ENCODE measurements at regions of chr11 and their contacts with region 1.

Region 1: DNA sequence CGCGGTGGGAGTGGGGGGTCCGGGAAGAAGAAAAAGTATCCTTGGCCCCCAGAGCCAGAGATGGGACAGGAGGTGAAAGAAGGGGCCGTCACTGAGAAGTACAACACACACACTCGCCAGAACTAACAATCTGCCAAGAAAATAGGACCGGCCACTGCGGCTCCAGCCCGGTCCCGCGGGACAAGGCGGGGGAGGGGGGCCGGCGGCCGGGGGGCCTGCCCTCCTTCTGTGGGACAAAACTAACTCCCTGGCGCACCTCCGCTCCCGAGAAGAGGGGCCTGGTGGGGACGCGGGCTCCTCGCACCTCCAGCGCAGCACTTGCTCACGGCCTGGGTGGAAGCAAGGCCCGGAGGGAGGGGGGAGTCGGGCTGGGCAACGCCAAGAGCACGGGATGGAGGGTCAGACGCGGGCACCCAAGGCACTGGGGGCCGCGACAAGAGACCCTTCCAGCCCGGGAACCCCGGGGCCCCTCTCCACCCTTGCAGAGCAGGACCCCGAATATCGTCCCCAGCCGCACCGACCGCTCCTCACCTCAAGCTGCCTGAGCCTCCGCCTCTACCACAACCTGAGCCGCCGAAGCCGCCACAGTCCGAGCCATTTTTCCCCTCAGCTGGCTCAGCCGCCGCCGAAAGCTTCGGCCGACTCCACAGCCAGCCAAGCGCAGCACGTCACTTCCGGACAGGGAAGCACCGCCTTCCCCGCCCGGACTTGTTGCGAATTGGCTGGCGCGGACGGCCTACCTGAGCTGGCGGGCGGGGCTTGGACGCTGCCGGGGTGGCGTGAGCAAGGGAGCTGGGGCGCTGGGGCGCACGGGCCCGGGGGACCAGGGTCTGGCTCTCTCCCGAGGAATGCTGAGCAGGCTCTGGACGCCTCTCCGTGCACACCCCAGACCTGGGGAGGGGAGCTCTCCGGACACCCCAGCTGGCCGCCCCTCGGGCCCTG is at the start of gene PIK3C2A:
- DNase-seq: peak; percentile 96
- H3K4me3 ChIP-seq: peak within 1 kb of the TSS; percentile 95
- H3K27ac ChIP-seq: peak within 1 kb of the TSS; percentile 89
- H3K4me1 ChIP-seq: peaks cover 6% of the 10 kb centered on the region
- H3K27me3 ChIP-seq: no peaks in the 10 kb centered on the region
- CTCF ChIP-seq: no peak
- total RNA-seq, gene PIK3C2A: 43.8 and 44.2 TPM in 2 replicates

Region 2: GRCh38 chr11:16871368-16871767 is 336.2 kb before region 1 on chr11:
- CTCF ChIA-PET with region 1: no interaction called
- POLR2A ChIA-PET with region 1: no interaction called
- intact Hi-C with region 1: no loop called
- DNase-seq: no peak
- H3K4me3 ChIP-seq: no peak overlapping the region
- H3K27ac ChIP-seq: no peak overlapping the region
- H3K4me1 ChIP-seq: peaks cover 9% of the 10 kb centered on the region
- H3K27me3 ChIP-seq: no peaks in the 10 kb centered on the region
- CTCF ChIP-seq: no peak

Region 3: GRCh38 chr11:17046690-17047089 is 160.9 kb before region 1 on chr11:
- CTCF ChIA-PET with region 1: no interaction called
- POLR2A ChIA-PET with region 1: no interaction called
- intact Hi-C with region 1: no loop called
- DNase-seq: no peak
- H3K4me3 ChIP-seq: no peak overlapping the region
- H3K27ac ChIP-seq: no peak overlapping the region
- H3K4me1 ChIP-seq: no peaks in the 10 kb centered on the region
- H3K27me3 ChIP-seq: no peaks in the 10 kb centered on the region
- CTCF ChIP-seq: no peak

Region 4: GRCh38 chr11:17077520-17078401 is 129.8 kb before region 1 on chr11 and contains the start of gene RPS13:
- CTCF ChIA-PET with region 1: no interaction called
- POLR2A ChIA-PET with region 1: interaction called, 3 read pairs
- intact Hi-C with region 1: loop called (anchors 5 kb)
- DNase-seq: peak; percentile 99
- H3K4me3 ChIP-seq: peak within 1 kb of the TSS; percentile 89
- H3K27ac ChIP-seq: peak within 1 kb of the TSS; percentile 94
- H3K4me1 ChIP-seq: peaks cover 14% of the 10 kb centered on the region
- H3K27me3 ChIP-seq: no peaks in the 10 kb centered on the region
- CTCF ChIP-seq: no peak
- total RNA-seq, gene RPS13: 704 and 746 TPM in 2 replicates

Region 5: DNA sequence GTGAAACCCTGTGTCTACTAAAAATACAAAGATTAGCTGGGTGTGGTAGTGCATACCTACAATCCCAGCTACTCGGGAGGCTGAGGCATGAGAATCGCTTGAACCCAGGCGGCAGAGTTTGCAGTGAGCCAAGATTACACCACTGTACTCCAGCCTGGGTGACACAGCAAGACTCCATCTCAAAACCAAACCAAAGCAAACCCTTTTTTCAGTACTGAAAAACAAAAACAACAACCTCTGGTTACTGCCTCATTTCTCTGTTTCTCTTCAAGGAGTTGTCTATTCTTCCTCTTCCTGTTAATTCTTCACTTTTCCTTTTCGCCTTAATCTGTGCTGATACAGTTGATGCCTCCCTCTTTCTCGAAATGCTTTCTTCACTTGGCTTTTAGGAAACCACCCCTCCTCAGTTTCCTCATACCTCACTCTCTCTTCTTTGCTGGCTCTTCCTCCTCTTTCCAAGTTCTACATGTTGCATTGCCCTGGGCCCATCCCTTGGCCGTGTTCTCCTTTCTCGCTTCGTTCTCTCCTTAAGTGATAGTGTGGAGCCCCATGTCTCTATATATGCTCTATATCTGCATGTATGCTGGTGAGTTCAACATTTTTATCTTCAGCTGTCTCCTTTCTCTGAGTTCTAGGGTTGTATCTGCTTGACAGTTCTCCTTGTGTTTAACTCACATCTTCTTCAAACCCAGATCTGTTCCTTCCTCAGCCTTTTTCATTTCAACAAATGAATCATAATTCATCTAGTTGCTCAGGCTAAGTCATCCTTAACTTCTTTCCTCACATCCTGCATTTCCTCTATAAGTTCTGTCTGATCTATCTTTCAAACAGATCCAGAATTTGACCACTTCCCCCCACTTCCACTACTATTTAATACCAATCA is 106.0 kb after region 1 on chr11:
- CTCF ChIA-PET with region 1: no interaction called
- POLR2A ChIA-PET with region 1: no interaction called
- intact Hi-C with region 1: no loop called
- DNase-seq: no peak
- H3K4me3 ChIP-seq: no peak overlapping the region
- H3K27ac ChIP-seq: no peak overlapping the region
- H3K4me1 ChIP-seq: no peaks in the 10 kb centered on the region
- H3K27me3 ChIP-seq: no peaks in the 10 kb centered on the region
- CTCF ChIP-seq: no peak

Region 6: GRCh38 chr11:17354601-17354991 is 147.0 kb after region 1 on chr11:
- CTCF ChIA-PET with region 1: interaction called, 13 read pairs
- POLR2A ChIA-PET with region 1: no interaction called
- intact Hi-C with region 1: no loop called
- DNase-seq: peak; percentile 84
- H3K4me3 ChIP-seq: peak overlapping the region; percentile 56
- H3K27ac ChIP-seq: no peak overlapping the region
- H3K4me1 ChIP-seq: peaks cover 4% of the 10 kb centered on the region
- H3K27me3 ChIP-seq: no peaks in the 10 kb centered on the region
- CTCF ChIP-seq: peak; percentile 74

Region 7: DNA sequence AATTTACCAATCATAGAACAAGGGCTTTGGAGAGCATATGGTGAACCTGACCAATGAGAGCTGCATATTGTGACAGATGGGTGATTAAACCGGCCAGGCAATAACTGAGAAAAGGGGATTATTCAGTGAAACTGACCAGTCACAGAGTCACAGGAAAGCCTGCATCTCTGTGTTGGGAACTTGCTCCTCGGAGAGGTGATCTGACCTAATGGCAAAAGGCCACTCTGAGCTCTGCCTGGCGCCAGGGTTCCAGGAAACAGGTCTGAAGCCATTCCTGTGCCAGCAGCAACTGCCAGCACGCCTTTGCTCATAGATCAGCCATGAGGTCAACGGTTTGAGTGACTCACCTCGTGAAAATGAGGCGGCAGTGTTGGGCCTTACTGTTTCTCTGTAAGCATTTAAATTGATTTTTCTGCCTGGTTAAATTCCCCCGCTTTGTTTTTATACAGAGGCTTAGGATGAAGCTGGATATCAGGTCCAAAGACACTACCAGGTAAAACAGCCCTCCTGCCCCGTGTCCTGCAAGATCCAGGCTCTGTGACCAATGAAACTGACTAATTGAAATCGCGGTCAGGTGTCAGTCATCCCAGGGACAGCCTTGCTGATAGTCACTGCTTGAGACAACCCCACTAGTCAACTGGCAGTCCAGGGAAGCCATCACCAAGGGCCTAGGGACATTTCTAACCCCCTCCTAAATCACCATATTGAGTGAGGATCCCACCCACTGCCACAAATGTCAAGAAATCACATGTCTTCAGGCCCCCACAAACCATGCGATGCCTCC is 476.0 kb after region 1 on chr11:
- CTCF ChIA-PET with region 1: no interaction called
- POLR2A ChIA-PET with region 1: no interaction called
- intact Hi-C with region 1: no loop called
- DNase-seq: no peak
- H3K4me3 ChIP-seq: no peak overlapping the region
- H3K27ac ChIP-seq: no peak overlapping the region
- H3K4me1 ChIP-seq: no peaks in the 10 kb centered on the region
- H3K27me3 ChIP-seq: peaks cover 71% of the 10 kb centered on the region
- CTCF ChIP-seq: no peak

Region 8: DNA sequence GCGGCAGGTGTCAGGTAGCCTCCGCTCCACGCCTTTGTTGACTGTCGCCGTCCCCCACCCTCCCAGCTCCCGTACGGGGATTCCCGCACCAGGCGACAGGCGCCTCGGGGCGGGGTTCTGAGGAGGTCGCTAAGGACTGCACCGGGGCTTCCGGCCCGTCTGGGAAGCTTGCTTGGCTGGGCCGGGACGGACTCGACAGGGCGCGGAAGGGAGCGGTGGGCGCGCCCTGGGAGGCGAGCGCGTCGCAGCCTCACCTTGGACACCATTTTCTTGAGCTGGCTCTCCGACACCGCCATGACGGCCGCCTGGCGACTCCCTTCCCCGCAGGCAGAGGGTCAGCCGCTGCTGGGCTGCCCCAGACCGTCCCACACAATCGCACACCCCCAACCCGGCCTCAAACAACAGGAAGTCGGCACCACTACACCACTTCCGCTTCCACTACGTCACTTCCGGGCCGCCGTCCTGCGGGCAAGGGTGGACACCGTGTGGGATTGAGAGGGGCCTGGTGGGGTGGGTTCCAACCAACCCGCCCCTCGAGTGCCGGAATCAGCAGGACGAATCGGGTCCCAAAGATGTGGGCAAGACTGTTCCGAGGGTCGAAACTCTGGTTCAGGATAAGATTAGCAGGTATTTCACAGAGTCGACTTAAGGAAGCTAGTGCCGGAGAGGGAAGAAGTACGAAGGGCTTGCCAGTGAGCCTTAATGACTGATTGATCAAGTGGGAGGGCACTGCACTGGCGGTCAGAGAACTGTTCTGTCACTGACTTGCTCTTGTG is 1319.1 kb after region 1 on chr11 and contains the start of gene TSG101:
- CTCF ChIA-PET with region 1: no interaction called
- POLR2A ChIA-PET with region 1: interaction called, 11 read pairs
- intact Hi-C with region 1: no loop called
- DNase-seq: peak; percentile 94
- H3K4me3 ChIP-seq: peak within 1 kb of the TSS; percentile 95
- H3K27ac ChIP-seq: peak within 1 kb of the TSS; percentile 86
- H3K4me1 ChIP-seq: no peaks in the 10 kb centered on the region
- H3K27me3 ChIP-seq: no peaks in the 10 kb centered on the region
- CTCF ChIP-seq: no peak
- total RNA-seq, gene TSG101: 48.2 and 49.1 TPM in 2 replicates

Measured in A673 (cell line).